PC-9 (cell line): ENCODE measurements at regions of chr3 and their contacts with region 1.

Region 1: DNA sequence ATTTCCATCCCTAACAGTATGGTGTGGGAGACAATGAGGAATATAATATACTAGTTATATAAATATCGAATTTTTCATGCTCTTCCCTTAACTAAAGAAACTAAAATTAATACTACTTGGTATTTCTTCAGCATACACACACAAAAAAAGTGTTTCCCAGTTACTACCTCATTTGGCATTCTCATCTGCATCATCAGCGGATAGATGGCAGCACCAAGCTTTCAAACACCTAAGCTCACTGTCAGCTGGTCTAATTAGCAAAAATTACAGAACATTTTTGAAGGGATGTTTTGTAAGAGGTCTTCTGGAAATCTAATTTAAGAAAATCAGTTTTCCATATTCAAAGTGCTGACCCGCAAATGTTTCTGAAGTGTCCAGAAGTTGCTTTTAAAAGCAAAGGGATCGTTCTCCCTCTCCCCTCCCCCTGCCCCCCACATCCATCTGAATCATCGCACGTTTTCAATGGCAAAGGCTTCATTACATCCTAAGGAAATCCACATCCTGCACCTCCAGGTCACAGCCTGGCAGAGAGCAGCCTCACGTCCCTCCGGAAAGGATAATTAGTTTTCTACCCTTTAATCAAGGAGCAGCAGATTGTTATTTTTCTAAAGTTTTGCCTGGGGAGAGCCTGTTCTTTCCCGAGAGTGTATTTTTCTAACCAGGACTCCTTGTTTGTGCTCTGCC is 86.1 kb upstream of the SPATA12 start:
- DNase-seq: no peak
- H3K4me3 ChIP-seq: no peak overlapping the region
- H3K27ac ChIP-seq: no peak overlapping the region
- H3K4me1 ChIP-seq: no peaks in the 10 kb centered on the region
- H3K27me3 ChIP-seq: no peaks in the 10 kb centered on the region
- CTCF ChIP-seq: no peak

Region 2: DNA sequence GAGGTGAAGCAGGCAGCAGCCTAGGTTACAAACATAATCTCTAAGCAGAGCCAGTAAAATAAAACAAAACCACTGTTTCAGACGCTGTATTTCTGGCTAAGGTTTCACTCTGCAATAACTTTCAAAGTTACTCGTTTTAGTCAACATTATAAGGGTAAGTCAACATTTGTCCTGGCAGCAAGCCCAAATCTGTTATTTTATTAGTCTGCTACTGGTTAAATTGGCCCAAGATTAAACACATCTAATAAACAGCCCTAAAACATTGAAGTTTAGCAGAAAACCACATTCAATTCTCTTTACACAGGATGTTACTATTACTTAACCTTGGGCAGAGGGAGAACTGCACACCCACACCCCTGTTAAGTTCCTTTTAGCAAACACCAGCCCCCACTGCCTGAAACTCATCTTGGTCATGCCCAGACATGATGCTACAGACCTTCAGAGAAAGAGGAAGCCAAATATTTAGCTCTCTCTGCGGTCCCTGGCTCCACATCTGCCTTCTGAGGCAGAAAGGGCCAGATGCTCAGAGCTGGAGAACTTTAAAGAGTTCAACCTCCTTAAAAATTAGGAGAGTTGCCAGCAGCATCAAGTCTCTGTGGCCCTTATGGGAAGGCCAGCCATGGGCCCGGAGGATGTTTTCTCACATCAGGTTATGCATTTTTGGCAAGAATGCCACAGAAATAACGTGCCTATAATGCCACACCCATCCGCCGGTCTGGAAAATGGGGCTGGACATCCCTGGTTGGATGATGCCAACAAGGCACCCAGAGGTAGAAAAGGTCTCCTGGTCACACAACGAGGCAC is 190.5 kb before region 1 on chr3:
- CTCF ChIA-PET with region 1: no interaction called
- POLR2A ChIA-PET with region 1: no interaction called
- intact Hi-C with region 1: no loop called
- DNase-seq: no peak
- H3K4me3 ChIP-seq: no peak overlapping the region
- H3K27ac ChIP-seq: no peak overlapping the region
- H3K4me1 ChIP-seq: peaks cover 7% of the 10 kb centered on the region
- H3K27me3 ChIP-seq: no peaks in the 10 kb centered on the region
- CTCF ChIP-seq: no peak

Region 3: GRCh38 chr3:56823421-56824343 is 150.7 kb before region 1 on chr3:
- CTCF ChIA-PET with region 1: interaction called, 12 read pairs
- POLR2A ChIA-PET with region 1: interaction called, 4 read pairs
- intact Hi-C with region 1: no loop called
- DNase-seq: peak in 1 of 2 experiments; percentile 9
- H3K4me3 ChIP-seq: no peak overlapping the region
- H3K27ac ChIP-seq: no peak overlapping the region
- H3K4me1 ChIP-seq: peaks cover 31% of the 10 kb centered on the region
- H3K27me3 ChIP-seq: no peaks in the 10 kb centered on the region
- CTCF ChIP-seq: no peak

Region 4: GRCh38 chr3:56957522-56957921 is 16.9 kb before region 1 on chr3:
- CTCF ChIA-PET with region 1: no interaction called
- POLR2A ChIA-PET with region 1: interaction called, 11 read pairs
- intact Hi-C with region 1: no loop called
- DNase-seq: no peak
- H3K4me3 ChIP-seq: no peak overlapping the region
- H3K27ac ChIP-seq: no peak overlapping the region
- H3K4me1 ChIP-seq: no peaks in the 10 kb centered on the region
- H3K27me3 ChIP-seq: no peaks in the 10 kb centered on the region
- CTCF ChIP-seq: no peak